B cell (primary cell): ENCODE measurements at regions of chr6 and their contacts with region 1.

Region 1: GRCh38 chr6:158686791-158687381 is 37.0 kb downstream of the SYTL3 start:
- DNase-seq: peak; percentile 76
- ATAC-seq: peak; percentile 75
- H3K4me3 ChIP-seq: no peak overlapping the region
- H3K4me3 Mint-ChIP-seq: peak overlapping the region; percentile 41
- H3K27ac ChIP-seq: peak overlapping the region; percentile 30 to 53
- H3K27ac Mint-ChIP-seq: peak overlapping the region; percentile 50
- H3K4me1 ChIP-seq: peaks cover 17 to 18% of the 10 kb centered on the region in 2 donors
- H3K4me1 Mint-ChIP-seq: peaks cover 25% of the 10 kb centered on the region
- H3K27me3 ChIP-seq: no peaks in the 10 kb centered on the region
- H3K27me3 Mint-ChIP-seq: no peaks in the 10 kb centered on the region
- CTCF ChIP-seq: no peak

Region 2: GRCh38 chr6:158213925-158214674 is 472.8 kb before region 1 on chr6:
- CTCF ChIA-PET with region 1: interaction called, 87 read pairs
- POLR2A ChIA-PET with region 1: no interaction called
- intact Hi-C with region 1: loop called (anchors 1 kb)
- DNase-seq: peak; percentile 76
- ATAC-seq: peak; percentile 90
- H3K4me3 ChIP-seq: no peak overlapping the region
- H3K4me3 Mint-ChIP-seq: no peak overlapping the region
- H3K27ac ChIP-seq: no peak overlapping the region
- H3K27ac Mint-ChIP-seq: no peak overlapping the region
- H3K4me1 ChIP-seq: no peaks in the 10 kb centered on the region
- H3K4me1 Mint-ChIP-seq: no peaks in the 10 kb centered on the region
- H3K27me3 ChIP-seq: no peaks in the 10 kb centered on the region
- H3K27me3 Mint-ChIP-seq: peaks cover 5% of the 10 kb centered on the region
- CTCF ChIP-seq: peak; percentile 82

Region 3: DNA sequence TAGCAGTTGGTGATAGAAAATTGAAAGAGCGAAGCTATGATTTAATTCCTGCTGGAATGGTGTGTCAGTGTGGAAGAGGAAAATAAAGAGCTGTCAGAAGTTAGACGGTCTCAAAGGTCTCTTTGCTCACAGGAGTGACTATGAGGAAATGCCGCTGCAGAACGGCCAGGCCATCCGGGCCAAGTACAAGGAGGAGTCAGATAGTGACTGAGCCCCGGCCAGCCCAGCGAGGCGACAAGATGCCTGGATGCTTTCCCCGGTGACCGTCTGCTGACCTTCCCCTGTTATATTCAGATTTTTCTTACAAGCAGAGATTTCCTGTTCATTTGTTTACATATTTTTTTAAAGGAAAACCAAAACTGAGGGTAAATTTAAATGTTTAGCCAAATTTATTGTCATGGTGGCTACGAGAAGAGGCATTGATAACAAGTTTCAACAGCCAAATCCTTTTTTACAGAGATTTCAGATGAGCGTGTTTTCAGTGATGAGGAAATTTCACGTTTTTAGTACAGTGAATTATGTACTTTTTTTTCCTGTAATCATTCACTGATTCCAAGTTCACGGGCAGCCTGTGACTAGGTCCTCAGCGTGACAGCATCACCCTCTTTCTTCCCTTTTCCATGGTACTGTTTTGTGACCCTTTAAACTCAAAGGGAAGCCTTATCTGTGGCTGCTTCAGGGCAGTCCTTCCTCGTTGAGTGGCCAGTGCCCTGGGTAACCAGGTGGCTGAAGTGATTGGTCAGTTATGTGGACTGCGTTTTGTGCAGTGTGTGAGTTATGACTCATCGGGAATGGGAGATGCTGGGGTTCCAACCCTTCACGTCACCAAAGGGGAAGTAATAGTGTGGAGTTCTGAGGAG is 55.0 kb before region 1 on chr6:
- CTCF ChIA-PET with region 1: interaction called, 11 read pairs
- POLR2A ChIA-PET with region 1: no interaction called
- intact Hi-C with region 1: no loop called
- DNase-seq: no peak
- ATAC-seq: no peak
- H3K4me3 ChIP-seq: no peak overlapping the region
- H3K4me3 Mint-ChIP-seq: no peak overlapping the region
- H3K27ac ChIP-seq: no peak overlapping the region
- H3K27ac Mint-ChIP-seq: peak overlapping the region; percentile 6
- H3K4me1 ChIP-seq: no peaks in the 10 kb centered on the region
- H3K4me1 Mint-ChIP-seq: no peaks in the 10 kb centered on the region
- H3K27me3 ChIP-seq: no peaks in the 10 kb centered on the region
- H3K27me3 Mint-ChIP-seq: no peaks in the 10 kb centered on the region
- CTCF ChIP-seq: no peak

Region 4: GRCh38 chr6:158649289-158650143 is 37.4 kb before region 1 on chr6 and contains the start of gene SYTL3:
- CTCF ChIA-PET with region 1: interaction called, 17 read pairs
- POLR2A ChIA-PET with region 1: interaction called, 3 read pairs
- intact Hi-C with region 1: loop called (anchors 5 kb)
- DNase-seq: peak; percentile 79
- ATAC-seq: peak; percentile 68
- H3K4me3 ChIP-seq: peak within 1 kb of the TSS in 3 of 5 experiments; percentile 29 to 39 (median 30)
- H3K4me3 Mint-ChIP-seq: peak within 1 kb of the TSS; percentile 85
- H3K27ac ChIP-seq: peak within 1 kb of the TSS; percentile 13 to 84
- H3K27ac Mint-ChIP-seq: peak within 1 kb of the TSS; percentile 98
- H3K4me1 ChIP-seq: peaks cover 18 to 26% of the 10 kb centered on the region in 2 donors
- H3K4me1 Mint-ChIP-seq: peaks cover 41% of the 10 kb centered on the region
- H3K27me3 ChIP-seq: peaks cover 0 to 3% (median 0%) of the 10 kb centered on the region in 4 experiments
- H3K27me3 Mint-ChIP-seq: no peaks in the 10 kb centered on the region
- CTCF ChIP-seq: no peak
- total RNA-seq, gene SYTL3: 4.4 and 5.4 TPM in 2 replicates

Region 5: GRCh38 chr6:158674342-158675131 is 12.3 kb before region 1 on chr6:
- CTCF ChIA-PET with region 1: interaction called, 11 read pairs
- POLR2A ChIA-PET with region 1: no interaction called
- intact Hi-C with region 1: no loop called
- DNase-seq: no peak
- ATAC-seq: no peak
- H3K4me3 ChIP-seq: no peak overlapping the region
- H3K4me3 Mint-ChIP-seq: no peak overlapping the region
- H3K27ac ChIP-seq: no peak overlapping the region
- H3K27ac Mint-ChIP-seq: no peak overlapping the region
- H3K4me1 ChIP-seq: no peaks in the 10 kb centered on the region
- H3K4me1 Mint-ChIP-seq: no peaks in the 10 kb centered on the region
- H3K27me3 ChIP-seq: peaks cover 0 to 2% (median 0%) of the 10 kb centered on the region in 4 experiments
- H3K27me3 Mint-ChIP-seq: no peaks in the 10 kb centered on the region
- CTCF ChIP-seq: no peak